ENCODE measurements at regions of chr11 and their contacts with region 1.

Region 1: GRCh38 chr11:72471005-72471898 is 36.9 kb upstream of the CLPB start:
- DNase-seq: peak; percentile 60
- ATAC-seq: peak; percentile 95
- H3K4me3 ChIP-seq: no peak overlapping the region
- H3K27ac ChIP-seq: no peak overlapping the region
- H3K4me1 ChIP-seq: no peaks in the 10 kb centered on the region; the same call in 1 of the 2 replicates
- H3K27me3 ChIP-seq: peaks cover 0 to 28% of the 10 kb centered on the region in 2 experiments; a peak in 4 of 5 replicates
- CTCF ChIP-seq: peak; percentile 83
- EP300 ChIP-seq: no peak
- POLR2A ChIP-seq: no peak
- RAD21 ChIP-seq: 0 out of 2 replicates have a peak, but pooled peaks have one; percentile 18

Region 2: DNA sequence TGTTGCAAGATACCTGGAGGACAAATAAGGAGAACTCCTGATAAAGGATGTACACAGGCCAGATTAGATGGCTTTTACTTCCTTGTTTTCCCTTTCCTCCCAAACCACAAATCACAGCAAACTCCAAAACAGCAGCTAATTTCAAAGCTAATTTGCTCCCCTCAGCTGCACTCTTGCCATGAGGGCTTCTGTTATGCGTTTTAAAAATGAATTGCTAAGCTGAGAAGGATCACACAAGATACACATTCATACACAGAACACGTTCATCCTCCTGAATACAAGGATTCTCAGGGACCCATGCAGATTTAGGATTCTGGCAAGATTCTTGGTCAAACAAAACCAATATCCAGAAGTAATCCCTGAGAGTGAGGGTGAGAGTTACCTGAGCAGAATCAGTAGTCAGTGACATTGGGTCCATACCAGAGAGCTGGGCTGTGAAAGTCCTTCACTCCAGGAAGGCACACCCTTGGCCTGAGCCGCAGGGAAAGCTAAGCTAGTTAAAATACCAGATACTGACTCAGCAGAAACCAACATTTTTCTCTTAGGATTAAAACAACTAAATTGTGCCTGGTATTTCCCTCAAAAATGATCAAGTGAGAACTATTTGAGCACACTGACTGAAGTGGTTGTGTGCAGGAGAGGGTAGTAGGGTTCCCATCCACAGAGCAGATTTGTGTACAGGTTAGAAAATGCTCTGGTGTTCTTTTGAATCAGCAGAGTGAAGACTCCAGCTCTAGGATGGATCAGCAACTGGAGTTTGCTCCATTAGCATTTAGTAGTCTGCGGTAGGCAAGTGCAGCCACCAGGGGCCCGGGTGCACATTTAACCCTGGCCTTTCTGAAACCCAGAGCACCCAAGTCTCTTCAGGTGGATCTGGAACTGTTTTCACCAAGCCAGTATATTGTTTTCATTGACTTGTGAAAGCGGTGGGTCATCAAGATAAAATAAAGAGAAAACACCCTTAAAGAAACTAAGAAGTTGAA is 63.6 kb after region 1 on chr11:
- CTCF ChIA-PET with region 1: no interaction called
- POLR2A ChIA-PET with region 1: no interaction called
- in situ Hi-C with region 1: no loop called
- intact Hi-C with region 1: no loop called
- DNase-seq: no peak
- ATAC-seq: peak; percentile 66
- H3K4me3 ChIP-seq: no peak overlapping the region
- H3K27ac ChIP-seq: no peak overlapping the region
- H3K4me1 ChIP-seq: no peaks in the 10 kb centered on the region
- H3K27me3 ChIP-seq: peaks cover 0 to 22% of the 10 kb centered on the region in 2 experiments; a peak in 3 of 5 replicates
- CTCF ChIP-seq: no peak
- EP300 ChIP-seq: no peak
- POLR2A ChIP-seq: no peak
- RAD21 ChIP-seq: no peak

Region 3: DNA sequence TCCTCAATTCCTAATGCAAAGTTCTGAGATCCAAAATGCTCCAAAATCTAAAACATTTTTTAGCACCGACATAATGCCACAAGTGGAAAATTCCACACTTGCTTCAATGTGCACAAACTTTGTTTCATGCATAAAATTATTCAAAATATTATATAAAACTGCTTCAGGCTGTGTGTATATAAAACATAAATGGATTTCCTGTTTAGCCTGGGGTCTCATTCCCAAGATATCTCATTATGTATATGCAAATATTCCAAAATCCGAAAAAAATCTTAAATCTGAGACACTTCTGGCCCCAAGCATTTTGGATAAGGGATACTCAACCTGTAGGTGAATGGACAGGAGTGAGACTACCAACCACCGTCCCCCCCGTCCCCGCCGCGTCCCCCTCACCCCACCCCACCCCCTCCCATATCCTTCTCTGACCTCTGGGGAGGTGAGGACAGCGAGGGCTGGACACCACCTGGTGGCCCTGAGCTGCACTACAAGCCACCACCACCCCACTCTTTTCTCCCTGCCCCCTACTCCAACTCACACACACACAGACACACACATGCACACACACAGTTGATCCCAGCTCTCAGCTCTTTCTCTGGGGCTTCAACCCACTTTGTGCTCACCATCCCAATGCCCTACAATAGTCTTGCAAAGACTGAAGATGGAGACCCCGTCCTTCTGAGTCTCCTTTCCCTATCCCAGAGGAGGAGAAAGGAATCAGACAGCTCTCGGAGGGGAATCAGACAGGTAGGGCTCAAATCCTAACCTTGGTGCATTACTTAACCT is 102.0 kb after region 1 on chr11:
- CTCF ChIA-PET with region 1: interaction called, 10 read pairs
- POLR2A ChIA-PET with region 1: no interaction called
- in situ Hi-C with region 1: loop called (anchors 5 kb)
- intact Hi-C with region 1: loop called (anchors 1 kb)
- DNase-seq: peak; percentile 9
- ATAC-seq: peak; percentile 87
- H3K4me3 ChIP-seq: no peak overlapping the region
- H3K27ac ChIP-seq: no peak overlapping the region
- H3K4me1 ChIP-seq: peaks cover 11% of the 10 kb centered on the region; the same call in 1 of the 2 replicates
- H3K27me3 ChIP-seq: peaks cover 2 to 40% of the 10 kb centered on the region in 2 experiments; a peak in 4 of 5 replicates
- CTCF ChIP-seq: peak; percentile 74
- EP300 ChIP-seq: no peak
- POLR2A ChIP-seq: no peak
- RAD21 ChIP-seq: no peak

Region 4: DNA sequence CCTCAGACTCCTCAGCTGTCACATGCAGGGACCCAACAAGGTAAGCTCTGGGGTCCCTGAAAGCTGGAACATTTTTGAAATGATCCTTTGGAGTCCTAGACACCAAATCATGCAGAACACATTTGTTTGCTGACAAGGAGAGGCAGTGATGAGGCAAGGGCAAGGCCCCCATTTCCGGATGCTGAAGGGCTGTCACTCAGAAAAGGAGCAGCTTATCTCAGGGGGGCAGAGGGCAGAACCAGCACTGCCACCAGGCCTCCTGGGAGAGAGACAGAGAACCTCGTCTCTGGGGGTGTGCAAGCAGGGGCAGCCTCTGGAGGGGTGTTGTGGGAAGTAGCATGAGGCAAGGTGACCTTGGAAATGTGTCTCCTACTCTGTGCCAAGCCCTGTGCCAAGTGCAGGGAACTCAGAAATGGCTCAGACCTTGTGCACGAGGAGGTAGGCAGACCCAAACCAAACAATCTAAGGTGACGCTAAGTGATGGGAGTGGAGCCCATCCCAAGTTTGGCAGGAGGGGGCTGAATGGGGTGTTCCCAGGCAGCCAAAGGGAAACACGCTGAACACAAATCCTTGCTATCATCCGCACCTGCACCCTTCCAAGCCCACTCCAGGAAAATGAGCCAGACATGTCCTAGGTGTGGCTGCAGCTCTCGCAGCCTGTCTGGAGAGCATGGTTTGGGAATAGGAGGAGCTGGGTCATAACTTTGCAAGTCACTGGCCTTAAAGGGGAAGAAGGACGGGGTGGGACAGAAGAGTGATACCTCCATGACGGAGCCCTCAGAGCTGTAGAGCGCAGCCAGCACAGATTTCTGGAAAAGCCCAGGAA is 108.8 kb after region 1 on chr11:
- CTCF ChIA-PET with region 1: no interaction called
- POLR2A ChIA-PET with region 1: no interaction called
- in situ Hi-C with region 1: loop called (anchors 5 kb)
- intact Hi-C with region 1: no loop called
- DNase-seq: no peak
- ATAC-seq: no peak
- H3K4me3 ChIP-seq: no peak overlapping the region
- H3K27ac ChIP-seq: no peak overlapping the region
- H3K4me1 ChIP-seq: peaks cover 2% of the 10 kb centered on the region; the same call in 1 of the 2 replicates
- H3K27me3 ChIP-seq: peaks cover 3 to 48% of the 10 kb centered on the region in 2 experiments; a peak in 3 of 5 replicates
- CTCF ChIP-seq: no peak
- EP300 ChIP-seq: no peak
- POLR2A ChIP-seq: no peak
- RAD21 ChIP-seq: no peak

Measured in HepG2 (cell line).